Prostate gland (tissue), 2 donors: ENCODE measurements at regions of chr15 and their contacts with region 1.

Region 1: DNA sequence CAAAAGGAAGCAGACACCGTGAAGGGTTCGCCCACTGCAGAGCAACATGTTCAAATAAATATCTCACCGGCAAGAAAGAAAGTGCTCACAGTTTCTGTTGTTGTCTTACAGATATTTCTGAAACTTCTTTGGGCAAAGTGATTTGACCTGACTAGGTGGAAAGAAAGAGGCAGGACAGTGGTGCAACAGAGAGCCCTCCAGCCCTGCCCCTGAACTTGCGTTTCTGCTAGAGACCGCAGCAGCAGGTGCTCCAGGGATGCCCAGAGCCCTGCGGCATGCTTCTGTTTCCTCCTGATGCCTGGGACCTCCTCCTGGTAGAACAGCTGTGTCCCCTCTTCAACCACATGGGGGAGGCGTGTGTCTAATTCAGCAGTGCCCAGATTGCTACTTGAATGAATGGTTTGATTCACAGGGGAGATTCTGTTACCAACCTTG is 123.4 kb downstream of the ATP10A start:
- DNase-seq: no peak
- H3K4me3 ChIP-seq: no peak overlapping the region
- H3K27ac ChIP-seq: no peak overlapping the region
- H3K4me1 ChIP-seq: no peaks in the 10 kb centered on the region
- H3K27me3 ChIP-seq: no peaks in the 10 kb centered on the region
- CTCF ChIP-seq: peak in 3 of 4 experiments; percentile 15 to 21 (median 16)
- POLR2A ChIP-seq: no peak

Region 2: GRCh38 chr15:25670025-25670554 is 69.6 kb before region 1 on chr15:
- intact Hi-C with region 1: loop called (anchors 5 kb)
- DNase-seq: peak; percentile 17
- H3K4me3 ChIP-seq: no peak overlapping the region
- H3K27ac ChIP-seq: peak overlapping the region in 1 of 2 donors; percentile 35
- H3K4me1 ChIP-seq: no peaks in the 10 kb centered on the region
- H3K27me3 ChIP-seq: no peaks in the 10 kb centered on the region
- CTCF ChIP-seq: no peak
- POLR2A ChIP-seq: no peak

Region 3: DNA sequence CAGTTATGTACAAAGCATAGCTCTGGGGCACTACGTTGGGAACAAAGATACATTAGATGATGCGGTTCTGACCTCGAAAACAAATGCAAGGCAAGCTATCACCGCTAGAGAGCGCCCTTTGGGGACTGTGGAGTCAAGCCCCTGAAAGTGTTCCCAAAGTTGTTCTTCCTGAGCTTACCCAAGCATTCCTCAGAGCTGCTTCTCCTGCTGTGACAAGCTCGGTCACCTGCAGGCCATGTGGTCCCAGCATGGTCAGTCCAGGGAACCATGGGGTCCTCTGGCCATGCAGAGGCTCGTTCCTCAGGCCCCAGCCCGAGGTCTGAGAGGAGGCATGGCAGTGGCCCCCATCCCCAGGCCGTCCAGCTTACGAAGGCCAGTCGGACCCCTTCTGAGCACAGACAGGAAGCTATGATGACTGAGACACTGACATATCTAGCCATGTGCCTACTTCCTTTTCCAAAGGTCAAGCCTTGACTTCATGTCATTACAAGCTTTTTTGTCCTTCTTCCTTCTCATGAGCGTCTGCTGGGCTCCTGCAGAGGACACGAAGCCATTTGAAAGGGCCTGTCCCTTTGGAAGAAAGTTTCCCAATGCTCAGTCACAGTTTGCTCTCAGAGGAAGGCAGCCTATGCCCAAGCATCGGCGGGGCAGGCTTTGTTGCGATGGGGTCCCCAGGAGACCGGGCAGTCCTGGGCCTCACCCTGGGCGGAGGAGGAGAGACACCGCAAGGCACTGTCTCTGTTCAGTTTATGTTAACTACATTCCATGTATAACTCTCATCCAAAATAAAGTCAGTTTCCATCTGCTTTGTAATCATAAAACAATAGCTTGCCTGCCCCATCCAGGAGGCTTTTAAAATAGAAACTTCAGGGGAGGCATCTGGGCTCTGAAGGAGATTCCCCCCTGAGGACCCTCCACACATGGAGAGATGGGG is 44.2 kb after region 1 on chr15:
- intact Hi-C with region 1: loop called (anchors 5 kb)
- DNase-seq: no peak
- H3K4me3 ChIP-seq: no peak overlapping the region
- H3K27ac ChIP-seq: no peak overlapping the region
- H3K4me1 ChIP-seq: peaks cover 11% of the 10 kb centered on the region
- H3K27me3 ChIP-seq: no peaks in the 10 kb centered on the region
- CTCF ChIP-seq: no peak
- POLR2A ChIP-seq: no peak

Region 4: DNA sequence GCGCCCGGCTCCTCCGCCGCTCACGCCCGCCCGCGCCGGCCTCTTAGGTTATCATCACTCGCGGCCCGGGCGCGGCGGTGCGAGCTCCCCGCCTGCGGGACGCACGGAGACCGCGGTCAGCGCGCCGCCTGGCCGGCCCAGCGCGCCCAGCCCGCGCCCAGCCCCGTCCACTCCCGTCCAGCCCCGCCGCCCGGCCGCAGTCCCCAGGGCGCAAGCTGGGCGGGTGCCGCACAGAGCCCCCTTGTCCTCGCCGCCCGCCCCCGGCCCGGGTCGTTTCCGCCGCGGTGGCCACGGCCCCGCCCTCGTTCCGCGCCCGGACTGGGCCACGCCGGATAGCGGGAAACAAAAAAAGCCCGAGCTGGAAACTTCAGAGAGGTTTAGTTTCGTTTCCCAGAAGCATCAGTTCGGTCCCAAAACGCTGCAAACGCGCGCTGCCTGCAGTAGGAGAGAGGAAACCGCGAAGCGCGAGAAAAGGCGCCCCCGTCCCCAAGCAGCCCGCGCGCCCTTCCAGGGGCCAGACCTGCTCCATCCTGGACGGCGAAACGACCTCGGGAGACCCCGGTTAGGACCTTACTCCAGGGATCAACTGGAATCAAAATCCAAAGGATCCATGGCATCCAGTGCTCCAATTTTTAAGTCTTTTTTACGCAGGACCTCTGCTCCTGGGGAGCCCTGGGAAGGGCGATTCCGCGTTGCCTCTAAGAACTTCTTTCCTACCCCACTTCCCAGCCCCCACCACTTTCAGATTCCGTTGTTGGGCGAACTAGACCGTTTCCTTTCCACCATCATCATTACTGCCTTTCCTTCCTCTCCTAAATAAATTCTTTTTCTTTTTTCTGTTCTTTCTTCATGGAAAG is 123.6 kb after region 1 on chr15 and contains the start of gene ATP10A:
- intact Hi-C with region 1: loop called (anchors 5 kb)
- DNase-seq: no peak
- H3K4me3 ChIP-seq: peak within 1 kb of the TSS; percentile 49 to 56
- H3K27ac ChIP-seq: peak within 1 kb of the TSS; percentile 66 to 72
- H3K4me1 ChIP-seq: peaks cover 5% of the 10 kb centered on the region
- H3K27me3 ChIP-seq: no peaks in the 10 kb centered on the region
- CTCF ChIP-seq: no peak
- POLR2A ChIP-seq: no peak
- total RNA-seq, gene ATP10A: 5.6 to 14.3 TPM

Region 5: GRCh38 chr15:25933456-25934158 is 193.9 kb after region 1 on chr15:
- intact Hi-C with region 1: loop called (anchors 2 kb)
- DNase-seq: peak; percentile 57
- H3K4me3 ChIP-seq: no peak overlapping the region
- H3K27ac ChIP-seq: no peak overlapping the region
- H3K4me1 ChIP-seq: no peaks in the 10 kb centered on the region
- H3K27me3 ChIP-seq: no peaks in the 10 kb centered on the region
- CTCF ChIP-seq: peak; percentile 27 to 66 (median 50)
- POLR2A ChIP-seq: no peak